Activated T-helper 1 cell treated with anti-CD3 and anti-CD28 coated beads, Interleukin-12 subunit alpha, Interleukin-12 subunit beta, Interleukin-2, Interleukin-4 antibody, amounts not matched to agents 30 ng/mL and 10 ng/mL and 1 ng/mL, durations not matched to agents 14 hours and 24 hours and 36 hours (primary cell): ENCODE measurements at regions of chr20 and their contacts with region 1.

Region 1: DNA sequence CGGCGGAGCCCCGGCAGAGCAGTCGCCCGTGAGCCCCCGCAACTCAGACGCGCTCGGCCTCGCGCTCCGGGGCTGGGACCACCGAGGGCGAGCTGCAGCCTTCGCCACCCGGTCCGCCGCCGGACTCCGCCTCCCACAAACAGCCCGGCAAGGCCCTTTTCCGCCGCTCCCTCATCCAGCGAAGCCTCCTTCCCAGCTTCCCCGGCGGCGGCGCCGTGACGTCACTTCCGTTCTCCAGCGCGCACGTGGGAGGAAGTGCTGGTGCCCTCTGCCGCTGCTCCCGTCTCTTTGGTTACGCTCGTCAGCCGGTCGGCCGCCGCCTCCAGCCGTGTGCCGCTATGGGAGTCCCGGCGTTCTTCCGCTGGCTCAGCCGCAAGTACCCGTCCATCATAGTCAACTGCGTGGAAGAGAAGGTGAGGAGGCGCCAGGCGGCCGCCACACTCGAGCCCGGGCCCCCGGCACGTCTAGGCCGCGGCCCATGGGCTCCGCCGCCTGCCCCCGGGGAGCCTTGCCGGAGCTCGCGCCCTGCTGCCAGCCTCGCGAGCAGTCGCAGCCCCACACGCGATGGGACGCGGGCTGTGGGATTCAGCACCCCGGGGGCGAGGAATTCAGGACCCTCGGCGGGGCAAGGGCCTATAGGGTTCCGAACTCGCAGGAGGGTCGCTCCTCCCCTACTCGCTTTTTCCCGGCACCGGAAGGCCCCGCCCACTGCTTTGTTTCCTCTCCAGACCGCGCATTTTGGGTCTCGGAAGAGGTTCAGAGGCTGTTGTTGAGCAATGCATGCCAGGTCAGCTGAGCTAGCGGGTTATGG is at the start of gene XRN2:
- DNase-seq: peak; percentile 93
- H3K4me3 Mint-ChIP-seq: peak within 1 kb of the TSS; percentile 97
- H3K27ac Mint-ChIP-seq: peak within 1 kb of the TSS; percentile 96
- H3K4me1 Mint-ChIP-seq: peaks cover 40% of the 10 kb centered on the region
- H3K27me3 Mint-ChIP-seq: peaks cover 4% of the 10 kb centered on the region
- total RNA-seq, gene XRN2: 92.1 and 94.0 TPM in 2 replicates

Region 2: GRCh38 chr20:20052074-20052970 is 1250.9 kb before region 1 on chr20 and contains the starts of genes CFAP61 and CRNKL1:
- intact Hi-C with region 1: loop called (anchors 1 kb)
- DNase-seq: peak; percentile 95
- H3K4me3 Mint-ChIP-seq: peak within 1 kb of the TSS; percentile 97
- H3K27ac Mint-ChIP-seq: peak within 1 kb of the TSS; percentile 96
- H3K4me1 Mint-ChIP-seq: peaks cover 13% of the 10 kb centered on the region
- H3K27me3 Mint-ChIP-seq: peaks cover 6% of the 10 kb centered on the region
- total RNA-seq, gene CFAP61: not detected in 2 replicates
- total RNA-seq, gene CRNKL1: 23.9 and 24.1 TPM in 2 replicates

Region 3: GRCh38 chr20:21099751-21100577 is 203.3 kb before region 1 on chr20:
- intact Hi-C with region 1: loop called (anchors 5 kb)
- DNase-seq: peak; percentile 39
- H3K4me3 Mint-ChIP-seq: peak overlapping the region; percentile 83
- H3K27ac Mint-ChIP-seq: peak overlapping the region; percentile 93
- H3K4me1 Mint-ChIP-seq: peaks cover 49% of the 10 kb centered on the region
- H3K27me3 Mint-ChIP-seq: peaks cover 70% of the 10 kb centered on the region

Region 4: DNA sequence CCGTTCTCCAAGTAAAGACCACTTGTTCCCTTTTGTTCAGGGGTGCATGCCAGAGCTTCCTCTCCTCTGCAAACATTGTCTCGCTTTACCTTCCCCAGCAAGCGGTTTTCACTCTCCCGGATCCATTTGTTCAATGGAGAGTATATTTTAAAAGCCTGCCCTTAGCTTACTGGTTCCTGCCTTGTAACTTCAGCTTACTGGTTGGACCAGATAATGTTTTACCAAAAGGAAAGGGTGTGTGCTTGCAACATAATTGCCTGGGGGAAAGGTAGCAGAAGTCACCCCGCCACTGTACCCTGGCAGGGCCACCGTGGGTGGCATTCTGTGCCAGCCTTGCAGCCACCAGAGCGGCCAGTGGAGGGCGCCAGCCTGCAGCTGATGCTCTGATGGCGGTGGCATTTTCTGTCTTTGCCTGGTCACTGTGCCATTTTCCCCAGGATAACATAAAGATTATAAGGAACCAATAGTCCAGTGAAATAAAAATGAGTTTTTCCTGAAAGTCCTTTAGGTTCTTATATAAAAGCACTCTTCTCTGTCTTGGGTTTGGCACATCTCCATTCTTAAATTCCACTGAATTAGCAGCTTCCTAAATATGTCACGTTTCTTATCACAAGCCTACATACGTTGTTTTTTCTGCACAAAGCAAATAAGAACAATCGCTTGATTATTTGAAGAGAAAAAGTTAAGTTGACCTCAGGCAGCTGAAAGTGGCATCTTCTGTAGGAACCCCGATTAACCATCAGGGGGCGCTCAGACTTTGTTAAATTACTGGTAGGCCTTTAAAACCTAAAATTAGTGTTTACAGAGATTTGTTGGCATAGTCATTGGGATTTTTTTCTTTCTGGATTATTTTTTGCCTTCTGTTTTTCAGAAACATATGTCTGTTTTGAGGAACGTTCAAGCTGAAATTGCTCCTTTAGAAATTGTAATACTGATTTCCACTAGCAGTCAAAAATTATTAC is 67.5 kb before region 1 on chr20:
- intact Hi-C with region 1: loop called (anchors 2 kb)
- DNase-seq: peak; percentile 46
- H3K4me3 Mint-ChIP-seq: no peak overlapping the region
- H3K27ac Mint-ChIP-seq: no peak overlapping the region
- H3K4me1 Mint-ChIP-seq: peaks cover 5% of the 10 kb centered on the region
- H3K27me3 Mint-ChIP-seq: no peaks in the 10 kb centered on the region

Region 5: DNA sequence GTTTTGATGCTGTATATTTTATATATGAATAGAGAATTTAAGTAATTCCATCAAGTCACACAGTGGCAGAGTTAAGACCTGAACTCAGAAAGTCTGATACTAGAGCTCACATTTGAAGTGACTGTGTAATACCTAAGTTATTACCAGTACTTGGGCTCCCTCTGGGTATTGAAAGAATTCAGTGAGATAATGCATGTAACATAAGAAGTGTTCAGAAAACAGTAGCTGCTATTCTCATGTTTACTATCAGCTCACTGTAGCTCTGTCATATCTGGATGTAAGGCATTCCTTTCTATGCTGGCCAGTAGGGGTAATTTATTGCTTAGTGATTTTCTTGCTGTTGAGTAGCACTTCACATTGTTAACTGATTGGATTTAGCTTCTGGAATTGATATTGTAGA is 49.4 kb after region 1 on chr20:
- intact Hi-C with region 1: loop called (anchors 10 kb)
- DNase-seq: no peak
- H3K4me3 Mint-ChIP-seq: no peak overlapping the region
- H3K27ac Mint-ChIP-seq: no peak overlapping the region
- H3K4me1 Mint-ChIP-seq: no peaks in the 10 kb centered on the region
- H3K27me3 Mint-ChIP-seq: no peaks in the 10 kb centered on the region

Region 6: DNA sequence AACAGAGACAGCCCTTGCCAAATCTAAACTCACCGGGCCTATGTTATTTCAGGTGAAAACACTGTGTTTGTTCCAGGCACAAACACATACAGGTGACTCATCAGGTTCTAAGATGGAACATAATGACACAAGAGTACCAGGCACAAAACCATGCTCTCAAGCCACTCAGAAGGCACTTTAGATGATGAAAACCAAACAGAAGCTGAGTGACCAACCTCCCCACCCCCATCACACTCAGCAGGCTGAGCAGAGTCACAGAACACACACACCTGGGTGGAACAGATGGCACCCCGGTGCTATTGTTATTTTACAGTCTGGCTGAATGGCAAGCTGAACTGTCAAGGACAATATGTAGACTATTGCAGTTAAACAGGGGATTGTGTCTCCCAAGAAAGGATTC is 231.2 kb after region 1 on chr20:
- intact Hi-C with region 1: no loop called
- DNase-seq: no peak
- H3K4me3 Mint-ChIP-seq: no peak overlapping the region
- H3K27ac Mint-ChIP-seq: no peak overlapping the region
- H3K4me1 Mint-ChIP-seq: peaks cover 6% of the 10 kb centered on the region
- H3K27me3 Mint-ChIP-seq: peaks cover 13% of the 10 kb centered on the region

Region 7: GRCh38 chr20:21559305-21559704 is 256.0 kb after region 1 on chr20:
- intact Hi-C with region 1: loop called (anchors 5 kb)
- DNase-seq: peak; percentile 24
- H3K4me3 Mint-ChIP-seq: peak overlapping the region; percentile 71
- H3K27ac Mint-ChIP-seq: peak overlapping the region; percentile 59
- H3K4me1 Mint-ChIP-seq: peaks cover 44% of the 10 kb centered on the region
- H3K27me3 Mint-ChIP-seq: peaks cover 5% of the 10 kb centered on the region